ENCODE measurements at regions of chr5 and their contacts with region 1.

Region 1: DNA sequence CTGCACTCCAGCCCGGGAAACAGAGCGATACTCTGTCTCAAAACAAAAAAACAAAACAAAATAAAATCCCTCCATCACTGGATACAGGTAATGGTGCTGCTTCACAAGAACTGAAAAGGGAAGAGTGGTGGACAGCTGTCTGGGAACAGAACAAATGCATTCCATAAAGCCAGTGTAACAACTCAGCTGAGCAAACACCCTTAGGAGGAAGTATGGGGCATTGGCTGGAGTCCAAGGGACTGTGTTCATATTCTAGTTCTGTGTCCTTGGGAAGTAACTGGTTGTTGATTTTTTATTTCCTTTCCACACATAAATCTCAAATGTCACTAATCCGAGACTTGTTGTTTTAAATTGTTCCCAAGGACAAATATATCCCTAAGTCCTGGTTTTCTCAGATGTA is 38.3 kb downstream of the HTR1A start:
- DNase-seq: peak; percentile 88
- H3K4me3 ChIP-seq: no peak overlapping the region
- H3K27ac ChIP-seq: no peak overlapping the region
- H3K4me1 ChIP-seq: no peaks in the 10 kb centered on the region
- H3K27me3 ChIP-seq: no peaks in the 10 kb centered on the region
- CTCF ChIP-seq: no peak

Region 2: DNA sequence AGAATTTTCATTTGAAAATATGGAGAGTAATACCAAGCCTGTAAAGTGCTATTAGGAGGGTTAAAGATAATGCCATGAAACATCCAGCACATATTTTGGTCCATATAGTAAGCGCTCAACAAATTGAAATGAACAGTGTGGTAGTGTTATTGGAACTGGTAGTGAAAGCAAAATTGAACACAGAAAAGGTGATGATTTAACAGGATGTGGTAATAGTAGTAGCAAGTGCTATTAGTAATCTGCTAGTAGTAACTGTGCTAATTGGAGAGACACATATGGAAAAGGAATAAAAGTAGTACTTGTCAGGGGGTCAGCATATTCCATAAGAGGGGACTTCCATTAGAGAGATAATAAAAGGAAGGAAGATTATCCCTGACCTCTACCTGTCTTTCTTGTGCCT is 149.0 kb before region 1 on chr5:
- intact Hi-C with region 1: no loop called
- DNase-seq: no peak
- H3K4me3 ChIP-seq: no peak overlapping the region
- H3K27ac ChIP-seq: no peak overlapping the region
- H3K4me1 ChIP-seq: no peaks in the 10 kb centered on the region
- H3K27me3 ChIP-seq: no peaks in the 10 kb centered on the region
- CTCF ChIP-seq: no peak

Region 3: GRCh38 chr5:63843190-63843589 is 80.7 kb before region 1 on chr5:
- intact Hi-C with region 1: loop called (anchors 5 kb)
- DNase-seq: peak; percentile 57
- H3K4me3 ChIP-seq: no peak overlapping the region
- H3K27ac ChIP-seq: no peak overlapping the region
- H3K4me1 ChIP-seq: no peaks in the 10 kb centered on the region
- H3K27me3 ChIP-seq: no peaks in the 10 kb centered on the region
- CTCF ChIP-seq: no peak

Measured in colonic mucosa (tissue), 4 donors.